Transverse colon (tissue), 4 donors: ENCODE measurements at regions of chrX and their contacts with region 1.

Region 1: GRCh38 chrX:43493756-43494155 is 162.3 kb upstream of the MAOA start:
- DNase-seq: no peak
- H3K4me3 ChIP-seq: no peak overlapping the region
- H3K27ac ChIP-seq: no peak overlapping the region
- H3K4me1 ChIP-seq: no peaks in the 10 kb centered on the region
- H3K27me3 ChIP-seq: no peaks in the 10 kb centered on the region
- CTCF ChIP-seq: no peak
- EP300 ChIP-seq: no peak
- POLR2A ChIP-seq: no peak

Region 2: GRCh38 chrX:42362219-42362618 is 1131.5 kb before region 1 on chrX:
- in situ Hi-C with region 1: no loop called
- intact Hi-C with region 1: loop called (anchors 5 kb)
- DNase-seq: no peak
- H3K4me3 ChIP-seq: no peak overlapping the region
- H3K27ac ChIP-seq: no peak overlapping the region
- H3K4me1 ChIP-seq: no peaks in the 10 kb centered on the region
- H3K27me3 ChIP-seq: no peaks in the 10 kb centered on the region
- CTCF ChIP-seq: no peak
- EP300 ChIP-seq: no peak
- POLR2A ChIP-seq: no peak

Region 3: DNA sequence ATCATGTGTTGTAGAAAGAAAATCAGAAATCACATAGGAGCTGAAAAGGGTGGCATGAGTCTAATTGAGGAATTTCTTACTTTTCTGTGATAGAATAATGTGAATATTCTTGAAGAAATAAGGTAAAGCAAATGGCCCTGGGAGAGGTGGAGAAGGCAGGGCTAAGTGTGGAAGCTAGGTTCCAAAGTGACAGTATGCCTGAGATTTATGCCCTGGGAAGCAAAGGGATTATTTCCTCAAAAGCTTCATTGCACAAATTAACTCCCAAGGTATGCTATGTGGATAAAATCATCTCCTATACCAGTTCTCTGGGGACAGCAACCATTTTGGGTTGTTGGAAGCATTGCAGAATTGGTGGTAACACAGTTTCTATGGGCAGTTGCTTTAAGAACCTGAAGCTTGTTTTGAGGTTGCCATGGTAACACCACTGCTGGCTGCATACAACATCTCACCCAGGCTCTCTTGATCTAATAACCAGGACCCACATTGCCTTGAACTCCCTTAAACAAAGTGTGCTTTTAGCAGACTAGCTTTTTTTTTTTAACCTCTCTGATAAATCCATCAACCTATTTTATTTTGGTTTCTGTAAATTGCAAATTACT is 183.3 kb after region 1 on chrX:
- in situ Hi-C with region 1: no loop called
- intact Hi-C with region 1: no loop called
- DNase-seq: no peak
- H3K4me3 ChIP-seq: no peak overlapping the region
- H3K27ac ChIP-seq: peak overlapping the region; percentile 49 to 69 (median 60)
- H3K4me1 ChIP-seq: peaks cover 0 to 35% (median 6%) of the 10 kb centered on the region in 4 donors
- H3K27me3 ChIP-seq: no peaks in the 10 kb centered on the region
- CTCF ChIP-seq: no peak
- EP300 ChIP-seq: no peak
- POLR2A ChIP-seq: no peak